ENCODE measurements at regions of chr3 and their contacts with region 1.

Region 1: DNA sequence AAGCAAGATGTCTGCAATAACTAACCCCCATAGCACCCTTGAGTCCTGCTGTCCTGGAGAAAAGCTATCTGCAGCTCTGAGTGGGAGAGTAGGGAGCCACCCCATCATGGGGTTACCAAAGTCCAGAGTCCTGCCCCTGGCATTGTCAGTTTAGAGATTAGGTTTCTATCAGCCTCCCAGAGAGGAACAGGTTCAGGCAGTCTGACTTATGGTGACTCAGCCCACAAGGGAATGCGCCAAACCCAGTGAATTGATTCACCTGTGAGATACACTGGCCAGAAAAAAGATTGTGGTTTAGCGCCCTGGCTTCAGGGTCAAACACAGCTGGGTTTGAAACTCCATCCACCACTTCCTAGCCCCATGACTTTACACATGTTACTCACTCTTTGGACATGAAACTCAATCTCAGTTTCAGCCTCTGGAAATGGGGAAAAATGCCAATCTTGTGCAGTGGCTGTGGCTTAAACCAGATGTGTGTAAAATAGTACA is 263.6 kb upstream of the HES1 start:
- DNase-seq: peak; percentile 97
- ATAC-seq: peak; percentile 58
- H3K4me3 ChIP-seq: peak overlapping the region in 1 of 2 experiments; percentile 35; a peak in 2 of 4 replicates
- H3K27ac ChIP-seq: peak overlapping the region; percentile 27; the same call in 1 of the 2 replicates
- H3K4me1 ChIP-seq: peaks cover 45 to 88% of the 10 kb centered on the region in 2 experiments
- H3K27me3 ChIP-seq: peaks cover 7% of the 10 kb centered on the region; the same call in 1 of the 2 replicates
- CTCF ChIP-seq: no peak
- POLR2A ChIP-seq: no peak
- RAD21 ChIP-seq: no peak

Region 2: GRCh38 chr3:193174140-193174539 is 698.2 kb before region 1 on chr3:
- CTCF ChIA-PET with region 1: no interaction called
- POLR2A ChIA-PET with region 1: no interaction called
- RAD21 ChIA-PET with region 1: no interaction called
- intact Hi-C with region 1: no loop called
- DNase-seq: no peak
- ATAC-seq: no peak
- H3K4me3 ChIP-seq: no peak overlapping the region
- H3K27ac ChIP-seq: no peak overlapping the region
- H3K4me1 ChIP-seq: no peaks in the 10 kb centered on the region
- H3K27me3 ChIP-seq: peaks cover 6% of the 10 kb centered on the region
- CTCF ChIP-seq: no peak
- POLR2A ChIP-seq: no peak
- RAD21 ChIP-seq: no peak

Region 3: GRCh38 chr3:193372783-193373182 is 499.5 kb before region 1 on chr3:
- CTCF ChIA-PET with region 1: no interaction called
- POLR2A ChIA-PET with region 1: no interaction called
- RAD21 ChIA-PET with region 1: no interaction called
- intact Hi-C with region 1: no loop called
- DNase-seq: no peak
- ATAC-seq: no peak
- H3K4me3 ChIP-seq: no peak overlapping the region
- H3K27ac ChIP-seq: no peak overlapping the region
- H3K4me1 ChIP-seq: no peaks in the 10 kb centered on the region
- H3K27me3 ChIP-seq: peaks cover 51% of the 10 kb centered on the region
- CTCF ChIP-seq: no peak
- POLR2A ChIP-seq: no peak
- RAD21 ChIP-seq: no peak

Region 4: DNA sequence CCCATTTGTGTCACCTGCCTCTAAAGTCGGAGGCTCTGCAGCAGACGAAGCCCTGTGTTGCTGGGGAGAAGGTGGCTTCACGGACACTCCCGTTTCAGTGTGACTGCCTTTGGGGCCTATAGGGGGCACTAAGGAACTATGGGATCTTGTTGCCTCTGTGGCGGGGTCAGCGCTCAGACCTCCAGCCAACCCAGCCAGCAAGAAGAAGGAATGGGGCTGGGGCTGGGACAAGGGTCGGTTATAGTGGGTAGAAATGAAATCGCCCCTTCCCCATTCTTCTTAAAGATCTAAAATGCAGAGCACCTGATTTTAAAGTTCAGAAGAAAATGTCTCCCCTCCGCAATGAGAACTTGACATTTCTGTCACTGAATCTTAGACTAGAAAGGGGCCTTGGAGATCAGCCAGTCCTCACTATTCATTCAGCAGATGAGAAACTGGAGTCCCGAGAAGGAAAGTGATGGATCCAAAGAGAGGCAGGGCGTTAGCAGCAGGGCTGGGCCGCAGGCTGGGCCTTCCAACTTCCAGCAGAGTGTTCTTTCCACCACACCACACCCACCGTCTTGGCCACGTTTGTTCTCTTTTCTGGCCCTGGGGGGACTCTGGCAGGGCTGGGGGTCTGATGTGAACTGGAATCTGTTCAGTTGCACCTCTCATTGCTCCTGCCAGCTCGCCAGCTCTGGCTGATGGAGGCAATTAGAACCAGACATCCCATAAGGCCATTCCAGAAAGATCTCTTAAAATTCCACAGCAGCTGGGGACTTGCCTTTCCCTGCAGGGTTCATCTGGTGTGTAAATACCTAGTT is 83.9 kb before region 1 on chr3:
- CTCF ChIA-PET with region 1: no interaction called
- POLR2A ChIA-PET with region 1: no interaction called
- RAD21 ChIA-PET with region 1: no interaction called
- intact Hi-C with region 1: loop called (anchors 5 kb)
- DNase-seq: peak; percentile 51
- ATAC-seq: peak; percentile 93
- H3K4me3 ChIP-seq: no peak overlapping the region
- H3K27ac ChIP-seq: no peak overlapping the region
- H3K4me1 ChIP-seq: peaks cover 7 to 38% of the 10 kb centered on the region in 2 experiments
- H3K27me3 ChIP-seq: peaks cover 18% of the 10 kb centered on the region; the same call in 1 of the 2 replicates
- CTCF ChIP-seq: peak; percentile 67 to 93 (median 90); a peak in 5 of 6 replicates
- POLR2A ChIP-seq: no peak
- RAD21 ChIP-seq: peak; percentile 99

Region 5: DNA sequence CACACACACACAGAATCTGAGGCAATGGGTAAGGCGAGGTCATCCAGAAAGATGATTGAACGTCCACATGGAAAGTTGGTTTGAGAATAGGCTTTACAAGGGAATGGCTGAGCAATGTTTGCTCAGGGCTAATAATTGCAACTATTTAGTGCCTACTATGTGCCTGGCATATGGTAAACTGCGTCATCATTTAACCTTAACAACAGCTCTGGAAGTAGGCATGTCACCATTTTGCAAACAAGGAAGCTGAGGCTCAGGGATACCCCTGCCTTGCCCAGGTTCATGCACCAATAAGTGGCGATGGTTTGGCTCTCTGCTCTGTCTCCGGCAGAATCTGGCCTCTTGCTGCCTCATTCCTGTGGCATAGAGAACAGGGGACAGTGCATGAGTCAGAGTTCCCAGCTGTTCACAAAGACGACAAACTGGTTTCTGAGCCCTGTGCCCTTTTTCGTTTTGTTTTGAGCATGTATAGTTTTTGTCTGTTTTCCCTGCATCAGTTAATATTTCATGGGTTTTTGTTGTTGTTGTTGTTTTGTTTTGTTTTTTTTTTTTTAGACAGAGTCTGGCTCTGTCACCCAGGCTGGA is 42.6 kb before region 1 on chr3:
- CTCF ChIA-PET with region 1: no interaction called
- POLR2A ChIA-PET with region 1: no interaction called
- RAD21 ChIA-PET with region 1: no interaction called
- intact Hi-C with region 1: loop called (anchors 2 kb)
- DNase-seq: peak; percentile 76
- ATAC-seq: peak; percentile 92
- H3K4me3 ChIP-seq: peak overlapping the region in 1 of 2 experiments; percentile 30; a peak in 1 of 4 replicates
- H3K27ac ChIP-seq: no peak overlapping the region
- H3K4me1 ChIP-seq: peaks cover 23 to 48% of the 10 kb centered on the region in 2 experiments
- H3K27me3 ChIP-seq: no peaks in the 10 kb centered on the region
- CTCF ChIP-seq: no peak
- POLR2A ChIP-seq: no peak
- RAD21 ChIP-seq: peak; percentile 30

Region 6: DNA sequence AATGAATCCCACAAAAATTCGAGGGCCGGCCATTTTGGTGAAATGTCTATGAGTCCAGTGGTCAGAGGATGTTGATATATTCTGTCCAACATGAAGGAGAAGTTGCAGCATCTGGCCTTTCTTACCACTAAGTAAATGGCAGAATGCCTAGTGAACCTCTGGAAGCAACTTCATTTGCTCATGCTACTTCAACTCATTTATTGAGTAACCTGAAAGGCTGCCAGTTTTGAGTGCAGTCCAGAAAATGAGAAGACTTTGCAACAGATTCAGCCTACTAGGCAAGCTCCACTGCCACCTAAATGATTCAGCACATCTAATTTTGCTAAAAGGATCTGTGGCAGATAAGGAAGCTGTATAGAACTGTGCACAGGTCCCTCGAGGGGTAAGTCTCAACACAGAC is 14.3 kb before region 1 on chr3:
- CTCF ChIA-PET with region 1: no interaction called
- POLR2A ChIA-PET with region 1: no interaction called
- RAD21 ChIA-PET with region 1: no interaction called
- intact Hi-C with region 1: no loop called
- DNase-seq: no peak
- ATAC-seq: no peak
- H3K4me3 ChIP-seq: no peak overlapping the region
- H3K27ac ChIP-seq: no peak overlapping the region
- H3K4me1 ChIP-seq: peaks cover 0 to 35% of the 10 kb centered on the region in 2 experiments; a peak in 3 of 4 replicates
- H3K27me3 ChIP-seq: no peaks in the 10 kb centered on the region
- CTCF ChIP-seq: no peak
- POLR2A ChIP-seq: no peak
- RAD21 ChIP-seq: no peak

Region 7: DNA sequence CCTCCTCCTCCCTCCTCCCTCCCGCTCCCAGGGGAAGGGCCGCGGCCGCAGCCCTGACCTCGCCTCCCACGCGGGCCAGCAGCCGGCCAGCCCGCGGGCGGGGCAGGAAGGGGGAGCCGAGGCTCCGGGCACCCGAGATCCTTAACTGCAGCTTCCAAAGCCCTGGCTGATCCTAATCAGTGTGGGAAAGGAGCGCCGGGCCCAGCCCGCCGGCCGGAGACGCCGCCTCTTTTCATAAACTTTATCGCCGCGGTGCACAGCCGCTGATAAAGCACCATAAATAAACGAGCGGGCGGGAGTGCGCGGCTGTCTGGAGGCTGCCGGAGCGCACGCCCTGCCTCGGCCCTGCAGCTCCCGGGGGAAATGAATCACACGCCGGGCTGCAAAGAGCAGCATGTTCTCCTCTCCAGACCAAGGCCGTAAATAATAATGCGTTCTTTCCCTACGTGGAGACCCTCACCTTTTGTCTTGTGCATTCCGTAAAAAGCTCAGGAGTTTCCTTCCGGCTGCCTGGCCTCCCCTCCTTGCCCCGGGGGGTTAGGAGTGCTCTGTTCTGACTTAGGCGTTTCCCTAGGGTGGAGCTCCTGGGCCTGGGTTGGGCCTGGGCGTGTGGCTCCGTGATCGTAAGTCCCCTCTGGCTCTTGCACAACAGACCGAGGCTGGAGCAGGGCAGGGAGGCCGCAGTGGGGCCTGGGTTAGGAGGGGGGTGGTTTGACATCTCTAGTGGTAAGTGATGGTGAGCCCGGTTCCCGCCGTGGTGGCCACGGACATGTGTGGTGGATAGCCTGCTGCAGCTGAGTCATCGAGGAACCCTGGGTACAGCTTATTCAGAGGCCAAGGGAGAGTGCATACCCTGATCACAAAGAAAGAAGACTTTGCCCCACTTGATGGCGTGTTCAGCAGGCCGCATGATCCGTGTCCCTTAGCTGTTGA is 131.1 kb after region 1 on chr3:
- CTCF ChIA-PET with region 1: no interaction called
- POLR2A ChIA-PET with region 1: no interaction called
- RAD21 ChIA-PET with region 1: no interaction called
- intact Hi-C with region 1: loop called (anchors 5 kb)
- DNase-seq: peak; percentile 71
- ATAC-seq: peak; percentile 87
- H3K4me3 ChIP-seq: peak overlapping the region; percentile 42 to 60
- H3K27ac ChIP-seq: peak overlapping the region; percentile 50
- H3K4me1 ChIP-seq: peaks cover 20 to 39% of the 10 kb centered on the region in 2 experiments
- H3K27me3 ChIP-seq: no peaks in the 10 kb centered on the region; the same call in 1 of the 2 replicates
- CTCF ChIP-seq: no peak
- POLR2A ChIP-seq: peak; percentile 80
- RAD21 ChIP-seq: peak; percentile 29; the same call in 1 of the 2 replicates

Region 8: GRCh38 chr3:194323785-194324735 is 451.8 kb after region 1 on chr3:
- CTCF ChIA-PET with region 1: no interaction called
- POLR2A ChIA-PET with region 1: no interaction called
- RAD21 ChIA-PET with region 1: no interaction called
- intact Hi-C with region 1: loop called (anchors 5 kb)
- DNase-seq: peak; percentile 76
- ATAC-seq: peak; percentile 52
- H3K4me3 ChIP-seq: peak overlapping the region; percentile 44 to 61
- H3K27ac ChIP-seq: peak overlapping the region; percentile 95
- H3K4me1 ChIP-seq: peaks cover 35 to 90% of the 10 kb centered on the region in 2 experiments
- H3K27me3 ChIP-seq: no peaks in the 10 kb centered on the region
- CTCF ChIP-seq: no peak
- POLR2A ChIP-seq: peak; percentile 54
- RAD21 ChIP-seq: no peak

Measured in HCT116 (cell line).